ENCODE measurements at regions of chr18 and their contacts with region 1.

Region 1: DNA sequence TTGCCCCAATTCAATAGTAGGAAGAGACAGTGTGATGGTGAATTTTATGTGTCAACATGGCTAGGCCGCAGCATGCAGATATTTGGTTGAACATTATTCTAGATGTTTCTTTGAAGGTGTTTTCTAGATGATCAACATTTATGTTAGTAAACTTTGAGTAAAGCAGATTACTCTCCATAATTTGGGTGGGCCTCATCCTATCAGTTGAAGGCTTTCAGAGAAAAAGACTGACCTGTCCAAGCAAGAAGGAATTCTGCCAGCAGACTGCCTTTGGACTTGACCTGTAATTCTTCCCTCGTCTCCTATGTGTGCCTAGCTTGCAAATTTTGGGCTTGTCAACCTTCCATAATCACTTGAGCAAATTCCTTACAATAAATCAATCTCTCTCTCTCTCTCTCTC is 8.3 kb upstream of the GRP start:
- DNase-seq: no peak
- ATAC-seq: no peak
- H3K4me3 ChIP-seq: no peak overlapping the region
- H3K4me3 Mint-ChIP-seq: no peak overlapping the region
- H3K27ac ChIP-seq: no peak overlapping the region
- H3K27ac Mint-ChIP-seq: no peak overlapping the region
- H3K4me1 ChIP-seq: no peaks in the 10 kb centered on the region
- H3K4me1 Mint-ChIP-seq: no peaks in the 10 kb centered on the region
- H3K27me3 ChIP-seq: peaks cover 0 to 4% of the 10 kb centered on the region in 2 experiments
- H3K27me3 Mint-ChIP-seq: peaks cover 27% of the 10 kb centered on the region
- CTCF ChIP-seq: no peak

Region 2: GRCh38 chr18:59232309-59233016 is 20.8 kb after region 1 on chr18:
- CTCF ChIA-PET with region 1: no interaction called
- POLR2A ChIA-PET with region 1: no interaction called
- intact Hi-C with region 1: loop called in 1 of 2 experiments (anchors 1 kb)
- DNase-seq: no peak
- ATAC-seq: no peak
- H3K4me3 ChIP-seq: no peak overlapping the region
- H3K4me3 Mint-ChIP-seq: no peak overlapping the region
- H3K27ac ChIP-seq: no peak overlapping the region
- H3K27ac Mint-ChIP-seq: no peak overlapping the region
- H3K4me1 ChIP-seq: no peaks in the 10 kb centered on the region
- H3K4me1 Mint-ChIP-seq: no peaks in the 10 kb centered on the region
- H3K27me3 ChIP-seq: peaks cover 0 to 3% of the 10 kb centered on the region in 2 experiments
- H3K27me3 Mint-ChIP-seq: peaks cover 41% of the 10 kb centered on the region
- CTCF ChIP-seq: no peak